Caco-2 (cell line): ENCODE measurements at regions of chrX and their contacts with region 1.

Region 1: DNA sequence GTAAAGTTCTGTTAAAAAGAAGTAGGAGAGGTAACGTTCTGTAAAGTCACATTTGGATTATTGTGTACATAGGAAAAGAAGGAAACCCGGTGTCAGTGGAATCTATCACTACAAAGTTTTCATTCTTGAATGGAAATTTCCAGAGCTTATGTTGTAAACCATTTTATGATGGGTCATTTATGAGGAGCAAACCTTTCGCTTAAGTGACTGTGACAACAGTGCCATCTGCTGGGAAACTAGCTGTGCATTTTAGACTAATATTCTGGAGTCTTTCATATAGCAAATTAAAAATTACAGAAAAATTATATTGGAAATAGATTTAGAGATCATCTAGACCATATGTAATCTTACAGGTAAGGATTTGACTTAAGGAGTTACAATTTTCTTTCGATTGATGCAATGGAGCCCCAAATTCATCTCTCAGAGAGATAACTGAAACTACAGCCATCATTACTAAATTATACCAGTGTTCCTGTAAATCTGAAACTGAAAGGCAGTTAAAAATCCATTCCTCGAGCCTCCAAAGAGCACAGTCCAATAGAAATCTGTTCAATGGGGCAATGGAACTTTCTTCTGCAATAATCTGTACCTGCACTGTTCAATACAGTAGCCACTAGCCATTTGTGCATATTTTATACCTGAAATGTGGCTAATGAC is 26.9 kb downstream of the ASB9 start:
- DNase-seq: peak; percentile 24 to 36
- H3K4me3 ChIP-seq: no peak overlapping the region
- H3K4me3 Mint-ChIP-seq: no peak overlapping the region
- H3K27ac Mint-ChIP-seq: no peak overlapping the region
- H3K4me1 ChIP-seq: no peaks in the 10 kb centered on the region
- H3K4me1 Mint-ChIP-seq: no peaks in the 10 kb centered on the region
- H3K27me3 ChIP-seq: no peaks in the 10 kb centered on the region
- H3K27me3 Mint-ChIP-seq: no peaks in the 10 kb centered on the region
- CTCF ChIP-seq: peak; percentile 25 to 26

Region 2: GRCh38 chrX:14039344-14039743 is 1203.7 kb before region 1 on chrX:
- CTCF ChIA-PET with region 1: no interaction called
- POLR2A ChIA-PET with region 1: no interaction called
- intact Hi-C with region 1: loop called (anchors 1 kb)
- DNase-seq: peak; percentile 34 to 47
- H3K4me3 ChIP-seq: no peak overlapping the region
- H3K4me3 Mint-ChIP-seq: no peak overlapping the region
- H3K27ac Mint-ChIP-seq: no peak overlapping the region
- H3K4me1 ChIP-seq: no peaks in the 10 kb centered on the region
- H3K4me1 Mint-ChIP-seq: no peaks in the 10 kb centered on the region
- H3K27me3 ChIP-seq: no peaks in the 10 kb centered on the region
- H3K27me3 Mint-ChIP-seq: peaks cover 4% of the 10 kb centered on the region
- CTCF ChIP-seq: peak; percentile 31 to 42

Region 3: DNA sequence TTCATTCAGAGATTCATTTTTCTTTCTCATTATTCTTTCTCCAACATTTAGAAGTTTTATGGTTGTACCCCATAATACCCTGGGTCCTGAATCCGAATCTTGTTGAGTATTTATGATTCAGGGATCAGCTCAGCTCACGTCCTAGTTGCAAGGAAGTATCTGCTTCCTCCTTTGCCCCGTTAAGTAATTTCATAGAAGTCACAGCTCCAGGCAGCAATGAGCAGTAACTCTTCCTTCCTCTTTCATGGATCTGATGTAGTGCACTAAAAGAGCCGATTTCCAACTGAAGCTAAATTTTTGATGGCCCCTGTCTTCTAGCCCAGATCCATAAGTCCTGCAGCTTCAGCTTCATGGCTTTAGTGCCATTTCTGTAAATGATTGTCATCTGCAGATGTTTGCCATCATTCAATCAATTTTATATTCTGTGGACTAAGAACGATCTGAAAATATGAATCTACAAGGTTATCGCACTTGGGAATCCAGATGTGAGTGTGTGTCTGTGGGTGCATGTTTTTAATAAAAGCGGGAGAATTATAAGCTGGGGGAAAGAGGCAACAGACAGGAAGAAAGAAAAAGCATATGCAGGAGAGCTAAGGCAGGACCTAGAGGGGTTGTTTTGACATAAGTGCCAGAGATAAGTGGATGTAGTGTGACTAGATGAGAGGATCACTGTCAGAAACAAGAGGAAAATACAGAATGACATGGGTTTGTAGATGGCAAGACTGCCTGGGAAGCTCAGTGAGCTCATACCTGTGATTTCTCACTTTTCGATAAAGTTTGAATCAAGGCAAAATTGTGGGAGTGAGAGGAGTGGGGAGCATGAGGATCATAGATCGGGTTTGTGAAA is 123.7 kb after region 1 on chrX:
- CTCF ChIA-PET with region 1: no interaction called
- POLR2A ChIA-PET with region 1: no interaction called
- intact Hi-C with region 1: no loop called
- DNase-seq: no peak
- H3K4me3 ChIP-seq: no peak overlapping the region
- H3K4me3 Mint-ChIP-seq: no peak overlapping the region
- H3K27ac Mint-ChIP-seq: no peak overlapping the region
- H3K4me1 ChIP-seq: no peaks in the 10 kb centered on the region
- H3K4me1 Mint-ChIP-seq: no peaks in the 10 kb centered on the region
- H3K27me3 ChIP-seq: no peaks in the 10 kb centered on the region; the same call in 1 of the 2 replicates
- H3K27me3 Mint-ChIP-seq: peaks cover 11% of the 10 kb centered on the region
- CTCF ChIP-seq: no peak

Region 4: GRCh38 chrX:15448010-15448640 is 205.1 kb after region 1 on chrX:
- CTCF ChIA-PET with region 1: no interaction called
- POLR2A ChIA-PET with region 1: no interaction called
- intact Hi-C with region 1: no loop called
- DNase-seq: no peak
- H3K4me3 ChIP-seq: no peak overlapping the region
- H3K4me3 Mint-ChIP-seq: no peak overlapping the region
- H3K27ac Mint-ChIP-seq: no peak overlapping the region
- H3K4me1 ChIP-seq: no peaks in the 10 kb centered on the region
- H3K4me1 Mint-ChIP-seq: no peaks in the 10 kb centered on the region
- H3K27me3 ChIP-seq: no peaks in the 10 kb centered on the region
- H3K27me3 Mint-ChIP-seq: no peaks in the 10 kb centered on the region
- CTCF ChIP-seq: no peak